ENCODE measurements at regions of chr5 and their contacts with region 1.

Region 1: DNA sequence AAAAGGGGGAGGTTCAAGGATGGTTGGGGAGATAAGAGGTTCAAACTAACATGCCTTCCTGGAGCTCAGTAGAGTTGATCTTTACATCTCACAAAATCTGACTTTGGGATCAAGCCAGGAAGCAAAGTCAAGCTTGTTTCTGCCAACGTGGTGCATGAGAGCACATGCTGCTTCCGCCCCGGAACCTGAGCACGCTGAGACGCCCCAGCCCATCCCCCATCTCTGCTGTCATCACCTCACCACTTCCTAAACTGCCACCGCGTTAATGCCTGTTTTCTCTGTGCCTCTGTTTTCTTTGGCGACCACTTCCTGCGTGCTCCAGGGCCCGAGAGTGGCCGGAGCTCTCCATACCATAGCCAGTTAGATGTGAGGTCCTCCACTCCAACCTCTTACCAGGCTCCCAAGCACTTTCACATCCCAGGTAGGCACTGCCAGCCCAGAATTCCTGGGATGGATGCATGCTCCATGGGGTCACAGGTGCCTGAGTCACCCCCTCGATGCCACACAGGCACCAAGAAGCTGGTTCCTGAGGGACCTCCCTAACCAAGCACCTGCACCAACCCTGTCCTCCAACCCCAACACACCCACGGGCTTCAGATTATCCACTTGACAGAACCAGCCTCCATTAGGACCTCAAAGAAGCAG is 31.2 kb upstream of the AFAP1L1 start:
- DNase-seq: no peak
- H3K4me3 ChIP-seq: no peak overlapping the region
- H3K27ac ChIP-seq: no peak overlapping the region
- H3K4me1 ChIP-seq: peaks cover 9% of the 10 kb centered on the region
- H3K27me3 ChIP-seq: no peaks in the 10 kb centered on the region
- CTCF ChIP-seq: no peak
- POLR2A ChIP-seq: no peak

Region 2: DNA sequence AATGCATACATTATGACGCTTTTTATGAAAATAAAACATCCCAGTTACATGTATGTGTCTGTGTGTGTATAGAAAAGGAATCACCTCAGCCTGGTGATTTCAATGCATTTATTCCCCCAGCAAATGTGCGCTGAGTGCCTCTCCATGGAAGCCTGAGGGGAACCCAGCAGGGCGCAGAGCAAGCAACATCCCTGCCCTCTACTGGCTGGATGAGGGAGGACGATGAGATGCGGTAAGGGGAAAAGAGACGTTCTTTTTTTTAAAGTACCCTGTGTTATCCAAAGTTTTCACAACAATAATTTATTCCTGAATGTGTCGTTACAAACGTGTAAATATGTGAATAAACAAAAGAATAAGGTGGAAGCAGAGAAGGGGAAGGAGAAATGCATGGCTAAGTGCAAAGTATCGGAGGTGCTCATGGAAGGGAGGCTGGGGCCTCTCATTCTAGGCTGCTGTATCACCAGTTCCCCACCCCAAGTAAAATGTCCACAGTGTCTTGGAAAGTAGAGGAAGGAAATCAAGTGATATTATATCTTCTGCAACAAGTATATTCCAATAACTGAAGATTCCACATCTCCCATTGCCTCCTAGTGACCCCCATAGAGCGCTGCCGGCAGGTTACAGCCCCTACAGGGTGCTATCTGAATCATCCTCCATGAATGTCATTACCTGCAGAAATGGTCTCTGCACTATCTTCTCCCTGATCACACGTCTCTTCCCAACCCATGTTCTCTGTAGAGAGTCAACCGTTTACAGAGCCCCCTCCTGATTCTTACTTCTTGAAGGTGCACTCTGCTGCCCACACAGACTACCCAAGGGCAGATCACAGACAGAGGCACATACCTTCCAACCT is 112.2 kb before region 1 on chr5:
- CTCF ChIA-PET with region 1: interaction called, 31 read pairs
- POLR2A ChIA-PET with region 1: no interaction called
- dilution Hi-C with region 1: no loop called
- intact Hi-C with region 1: no loop called
- DNase-seq: peak; percentile 16
- H3K4me3 ChIP-seq: no peak overlapping the region
- H3K27ac ChIP-seq: no peak overlapping the region
- H3K4me1 ChIP-seq: peaks cover 12% of the 10 kb centered on the region
- H3K27me3 ChIP-seq: no peaks in the 10 kb centered on the region
- CTCF ChIP-seq: peak; percentile 75 to 80
- POLR2A ChIP-seq: no peak

Region 3: GRCh38 chr5:149133795-149134780 is 106.4 kb before region 1 on chr5:
- CTCF ChIA-PET with region 1: interaction called, 31 read pairs
- POLR2A ChIA-PET with region 1: no interaction called
- dilution Hi-C with region 1: no loop called
- intact Hi-C with region 1: no loop called
- DNase-seq: peak; percentile 79
- H3K4me3 ChIP-seq: no peak overlapping the region
- H3K27ac ChIP-seq: peak overlapping the region; percentile 96
- H3K4me1 ChIP-seq: peaks cover 36% of the 10 kb centered on the region
- H3K27me3 ChIP-seq: no peaks in the 10 kb centered on the region
- CTCF ChIP-seq: no peak
- POLR2A ChIP-seq: no peak

Region 4: DNA sequence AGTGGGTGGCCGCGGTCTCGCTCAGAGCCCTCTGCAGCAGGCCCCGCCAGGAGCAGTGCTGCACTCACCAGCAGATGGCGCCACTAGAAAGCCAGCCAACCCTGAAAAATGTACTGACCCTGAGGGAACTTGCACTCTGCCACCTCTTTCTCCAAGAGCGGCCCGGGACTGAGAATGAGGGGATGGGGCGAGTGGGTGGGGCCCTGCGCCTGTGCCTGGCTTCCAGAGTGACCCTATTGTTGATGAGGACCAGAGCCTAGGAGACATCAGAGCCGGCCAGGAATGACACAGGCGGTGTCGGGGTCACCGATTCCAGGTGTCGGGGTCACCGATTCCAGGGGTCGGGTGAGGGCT is 141.5 kb after region 1 on chr5:
- CTCF ChIA-PET with region 1: no interaction called
- POLR2A ChIA-PET with region 1: no interaction called
- dilution Hi-C with region 1: no loop called
- intact Hi-C with region 1: no loop called
- DNase-seq: peak; percentile 60
- H3K4me3 ChIP-seq: no peak overlapping the region
- H3K27ac ChIP-seq: no peak overlapping the region
- H3K4me1 ChIP-seq: no peaks in the 10 kb centered on the region
- H3K27me3 ChIP-seq: no peaks in the 10 kb centered on the region
- CTCF ChIP-seq: peak; percentile 86 to 97
- POLR2A ChIP-seq: no peak

Measured in endothelial cell of umbilical vein (primary cell).